Right ventricle myocardium inferior (tissue), 1 donor: ENCODE measurements at regions of chr1 and their contacts with region 1.

Region 1: GRCh38 chr1:3133686-3134085 is 64.7 kb downstream of the PRDM16 start:
- DNase-seq: no peak
- ATAC-seq: no peak

Region 2: DNA sequence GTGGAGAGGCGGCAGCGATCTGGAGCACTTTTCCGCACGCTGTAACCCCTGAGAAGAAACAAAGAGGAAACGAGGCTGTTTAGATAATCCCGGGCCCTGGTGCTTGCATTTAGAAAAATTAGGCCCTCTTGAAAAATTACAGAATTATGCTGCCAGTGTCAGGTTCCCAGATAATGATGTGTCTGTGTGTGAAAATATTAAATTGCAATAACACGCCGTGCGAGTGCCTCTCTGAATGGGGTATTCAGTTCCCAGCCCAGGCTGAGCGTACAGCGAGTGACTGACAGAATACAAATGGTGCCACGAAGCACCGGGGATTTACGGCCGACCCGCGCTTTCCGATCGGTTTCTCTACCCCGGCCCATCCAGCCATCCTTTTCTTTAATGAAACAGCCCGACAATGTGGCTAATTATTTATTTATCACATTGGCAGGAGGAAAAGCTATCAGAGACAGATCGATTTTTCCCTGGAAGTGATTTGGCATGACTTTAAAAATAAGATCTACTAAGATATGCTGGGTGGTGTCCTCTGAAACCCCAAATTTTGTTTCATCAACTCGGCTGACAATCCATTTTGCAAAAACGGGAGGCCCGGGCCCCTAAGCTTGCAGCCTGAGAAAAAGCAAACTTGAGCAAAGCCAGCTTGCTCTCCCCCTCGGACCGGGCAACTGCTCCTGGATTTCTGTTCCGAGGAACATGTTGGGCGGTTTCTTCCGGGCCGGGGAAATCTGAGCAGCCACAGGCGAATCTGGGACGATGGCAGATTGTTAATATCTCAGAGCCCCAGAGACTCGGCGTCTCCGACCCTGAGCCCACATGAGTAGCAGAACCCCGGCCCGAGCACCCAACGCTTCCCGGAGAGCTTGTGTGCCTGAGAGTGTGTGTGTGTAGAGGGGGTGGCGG is 53.4 kb before region 1 on chr1:
- intact Hi-C with region 1: loop called (anchors 2 kb)
- DNase-seq: no peak
- ATAC-seq: no peak